ENCODE measurements at regions of chr20 and their contacts with region 1.

Region 1: GRCh38 chr20:17958373-17959256 is 10.0 kb downstream of the SNX5 start:
- DNase-seq: no peak
- H3K4me3 Mint-ChIP-seq: peak overlapping the region; percentile 44
- H3K27ac Mint-ChIP-seq: peak overlapping the region; percentile 71
- H3K4me1 Mint-ChIP-seq: peaks cover 76% of the 10 kb centered on the region
- H3K27me3 Mint-ChIP-seq: no peaks in the 10 kb centered on the region

Region 2: GRCh38 chr20:17948442-17948841 is 10.2 kb before region 1 on chr20:
- intact Hi-C with region 1: loop called (anchors 2 kb)
- DNase-seq: no peak
- H3K4me3 Mint-ChIP-seq: no peak overlapping the region
- H3K27ac Mint-ChIP-seq: peak overlapping the region; percentile 0
- H3K4me1 Mint-ChIP-seq: peaks cover 23% of the 10 kb centered on the region
- H3K27me3 Mint-ChIP-seq: no peaks in the 10 kb centered on the region

Region 3: GRCh38 chr20:18090044-18090443 is 131.4 kb after region 1 on chr20:
- intact Hi-C with region 1: no loop called
- DNase-seq: no peak
- H3K4me3 Mint-ChIP-seq: no peak overlapping the region
- H3K27ac Mint-ChIP-seq: no peak overlapping the region
- H3K4me1 Mint-ChIP-seq: no peaks in the 10 kb centered on the region
- H3K27me3 Mint-ChIP-seq: no peaks in the 10 kb centered on the region

Measured in activated CD4-positive, alpha-beta T cell treated with anti-CD3 and anti-CD28 coated beads, Interleukin-2, amount 10 ng/mL, durations not matched to agents 24 days and 14 days (primary cell).